ENCODE measurements at regions of chr12 and their contacts with region 1.

Region 1: DNA sequence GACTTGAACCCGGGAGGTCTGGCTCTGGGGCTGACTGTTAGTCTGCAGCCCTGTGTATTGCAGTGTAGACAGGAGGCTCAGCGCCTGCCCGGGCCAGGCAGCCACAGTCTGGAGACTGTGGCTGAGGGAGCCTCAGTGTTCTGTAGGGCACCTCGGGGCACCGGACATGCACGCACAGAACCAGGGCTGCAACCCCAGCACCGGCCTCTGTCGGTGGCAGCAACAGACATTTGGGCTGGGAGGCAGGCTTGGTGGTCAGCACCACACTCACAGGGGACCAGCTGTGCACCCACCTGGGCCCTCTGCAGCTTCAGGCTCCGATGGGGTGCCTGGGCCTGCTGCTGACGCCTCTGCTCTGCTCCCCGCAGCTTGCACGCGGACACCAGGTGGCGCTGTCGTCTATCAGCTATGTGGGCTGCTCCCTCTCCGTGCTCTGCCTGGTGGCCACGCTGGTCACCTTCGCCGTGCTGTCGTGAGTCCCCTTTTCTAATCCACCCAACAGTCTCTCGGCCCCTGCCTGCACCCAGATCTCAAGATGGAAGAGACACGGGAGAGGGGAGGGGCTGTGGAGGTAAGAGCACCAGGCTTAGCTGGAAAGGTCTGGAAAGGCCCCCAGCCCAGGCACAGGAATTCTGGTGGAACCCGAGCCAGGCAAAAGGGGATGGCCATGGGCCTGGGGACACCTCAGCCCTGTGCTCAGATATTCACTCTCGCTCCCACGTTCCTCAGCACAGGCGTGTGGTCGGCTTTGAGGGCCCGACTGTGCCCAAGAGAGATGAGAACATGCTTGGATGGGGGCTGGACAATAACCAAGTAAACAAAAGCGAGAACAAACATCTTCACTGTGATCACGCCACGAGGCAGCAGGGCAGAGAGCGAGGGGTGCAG is 151.0 kb downstream of the ADGRD1 start:
- DNase-seq: peak; percentile 94
- ATAC-seq: peak; percentile 80
- H3K4me3 Mint-ChIP-seq: no peak overlapping the region
- H3K27ac Mint-ChIP-seq: no peak overlapping the region
- H3K4me1 Mint-ChIP-seq: peaks cover 22% of the 10 kb centered on the region
- H3K27me3 Mint-ChIP-seq: peaks cover 2% of the 10 kb centered on the region

Region 2: DNA sequence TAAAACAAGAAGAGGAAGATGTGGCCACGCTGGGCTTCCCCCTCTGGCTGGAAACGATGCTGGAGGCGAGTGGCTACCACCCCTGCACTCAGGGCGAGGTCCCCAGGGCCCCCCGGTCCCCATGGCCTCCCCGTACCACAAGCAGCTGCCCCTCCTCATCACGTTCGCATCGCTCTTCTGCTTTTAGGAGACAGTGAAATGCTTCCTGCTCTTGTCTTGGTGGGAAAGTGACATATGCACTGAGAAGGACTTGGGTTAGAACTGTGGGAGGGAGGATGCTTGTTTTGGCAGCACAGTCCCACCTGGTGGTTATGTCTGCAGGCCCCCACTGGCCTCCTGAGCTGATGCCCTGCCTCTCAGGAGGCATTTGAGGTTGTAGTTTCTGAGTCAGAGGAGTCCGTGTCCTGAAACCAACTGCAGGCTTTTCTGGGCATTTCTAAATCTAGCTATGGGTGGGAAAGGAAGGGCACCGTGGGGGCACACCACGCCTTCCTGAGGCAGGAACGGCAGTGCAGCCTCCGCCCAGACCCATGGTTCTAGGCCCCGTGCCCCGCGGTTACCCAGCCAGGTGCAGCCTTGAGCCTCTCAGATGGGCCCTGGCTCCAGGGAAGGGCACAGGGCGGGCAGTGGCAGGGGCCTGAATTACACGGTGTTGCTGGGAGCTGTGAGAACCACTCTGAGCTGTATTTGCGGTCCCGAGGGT is 11.7 kb before region 1 on chr12:
- CTCF ChIA-PET with region 1: interaction called, 24 read pairs
- POLR2A ChIA-PET with region 1: no interaction called
- intact Hi-C with region 1: no loop called
- DNase-seq: peak; percentile 70
- ATAC-seq: peak; percentile 70
- H3K4me3 Mint-ChIP-seq: peak overlapping the region; percentile 45
- H3K27ac Mint-ChIP-seq: peak overlapping the region; percentile 59
- H3K4me1 Mint-ChIP-seq: peaks cover 21% of the 10 kb centered on the region
- H3K27me3 Mint-ChIP-seq: peaks cover 3% of the 10 kb centered on the region

Region 3: DNA sequence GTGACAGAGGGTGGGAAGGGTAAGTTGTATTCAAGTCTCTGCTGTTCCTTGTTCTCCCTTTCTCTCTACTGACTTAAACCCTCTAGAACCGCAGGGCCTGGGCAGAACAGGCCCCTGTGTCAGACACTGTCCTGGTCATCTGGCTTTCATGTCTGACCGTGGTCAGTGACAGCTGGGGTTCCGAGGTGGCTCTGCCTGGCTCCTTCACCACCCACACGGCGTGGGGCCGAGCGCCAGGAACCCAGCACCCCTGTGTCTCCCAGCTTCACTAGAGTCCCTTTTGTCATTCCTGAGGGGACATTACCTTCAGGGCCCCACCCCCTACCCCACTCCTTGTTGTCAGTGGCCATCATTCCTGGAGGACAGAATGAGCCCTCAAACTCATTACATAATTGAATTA is 17.9 kb after region 1 on chr12:
- CTCF ChIA-PET with region 1: interaction called, 15 read pairs
- POLR2A ChIA-PET with region 1: interaction called, 3 read pairs
- intact Hi-C with region 1: no loop called
- DNase-seq: no peak
- ATAC-seq: no peak
- H3K4me3 Mint-ChIP-seq: no peak overlapping the region
- H3K27ac Mint-ChIP-seq: no peak overlapping the region
- H3K4me1 Mint-ChIP-seq: no peaks in the 10 kb centered on the region
- H3K27me3 Mint-ChIP-seq: no peaks in the 10 kb centered on the region

Region 4: GRCh38 chr12:131137836-131138637 is 33.3 kb after region 1 on chr12:
- CTCF ChIA-PET with region 1: interaction called, 102 read pairs
- POLR2A ChIA-PET with region 1: no interaction called
- intact Hi-C with region 1: loop called in 1 of 2 experiments (anchors 2 kb)
- DNase-seq: no peak
- ATAC-seq: no peak
- H3K4me3 Mint-ChIP-seq: no peak overlapping the region
- H3K27ac Mint-ChIP-seq: no peak overlapping the region
- H3K4me1 Mint-ChIP-seq: no peaks in the 10 kb centered on the region
- H3K27me3 Mint-ChIP-seq: no peaks in the 10 kb centered on the region

Region 5: GRCh38 chr12:131218026-131218922 is 113.6 kb after region 1 on chr12:
- CTCF ChIA-PET with region 1: no interaction called
- POLR2A ChIA-PET with region 1: no interaction called
- intact Hi-C with region 1: loop called in 1 of 2 experiments (anchors 10 kb)
- DNase-seq: no peak
- ATAC-seq: no peak
- H3K4me3 Mint-ChIP-seq: no peak overlapping the region
- H3K27ac Mint-ChIP-seq: no peak overlapping the region
- H3K4me1 Mint-ChIP-seq: peaks cover 13% of the 10 kb centered on the region
- H3K27me3 Mint-ChIP-seq: peaks cover 21% of the 10 kb centered on the region

Region 6: GRCh38 chr12:131830335-131830913 is 725.7 kb after region 1 on chr12:
- CTCF ChIA-PET with region 1: no interaction called
- POLR2A ChIA-PET with region 1: no interaction called
- intact Hi-C with region 1: loop called (anchors 2 to 10 kb)
- DNase-seq: peak; percentile 69
- ATAC-seq: peak; percentile 63
- H3K4me3 Mint-ChIP-seq: peak overlapping the region; percentile 12
- H3K27ac Mint-ChIP-seq: no peak overlapping the region
- H3K4me1 Mint-ChIP-seq: peaks cover 11% of the 10 kb centered on the region
- H3K27me3 Mint-ChIP-seq: peaks cover 39% of the 10 kb centered on the region